MCF 10A (cell line): ENCODE measurements at regions of chr11 and their contacts with region 1.

Region 1: GRCh38 chr11:76782526-76783293 is 446 bp upstream of the TSKU start:
- DNase-seq: peak; percentile 90
- H3K4me3 Mint-ChIP-seq: peak overlapping the region; percentile 83
- H3K27ac Mint-ChIP-seq: peak overlapping the region; percentile 17
- H3K4me1 Mint-ChIP-seq: peaks cover 56% of the 10 kb centered on the region
- H3K27me3 Mint-ChIP-seq: no peaks in the 10 kb centered on the region
- CTCF ChIP-seq: no peak

Region 2: GRCh38 chr11:76588455-76589325 is 194.0 kb before region 1 on chr11:
- CTCF ChIA-PET with region 1: no interaction called
- POLR2A ChIA-PET with region 1: no interaction called
- intact Hi-C with region 1: no loop called
- DNase-seq: no peak
- H3K4me3 Mint-ChIP-seq: no peak overlapping the region
- H3K27ac Mint-ChIP-seq: peak overlapping the region; percentile 66
- H3K4me1 Mint-ChIP-seq: peaks cover 6% of the 10 kb centered on the region
- H3K27me3 Mint-ChIP-seq: no peaks in the 10 kb centered on the region
- CTCF ChIP-seq: no peak

Region 3: DNA sequence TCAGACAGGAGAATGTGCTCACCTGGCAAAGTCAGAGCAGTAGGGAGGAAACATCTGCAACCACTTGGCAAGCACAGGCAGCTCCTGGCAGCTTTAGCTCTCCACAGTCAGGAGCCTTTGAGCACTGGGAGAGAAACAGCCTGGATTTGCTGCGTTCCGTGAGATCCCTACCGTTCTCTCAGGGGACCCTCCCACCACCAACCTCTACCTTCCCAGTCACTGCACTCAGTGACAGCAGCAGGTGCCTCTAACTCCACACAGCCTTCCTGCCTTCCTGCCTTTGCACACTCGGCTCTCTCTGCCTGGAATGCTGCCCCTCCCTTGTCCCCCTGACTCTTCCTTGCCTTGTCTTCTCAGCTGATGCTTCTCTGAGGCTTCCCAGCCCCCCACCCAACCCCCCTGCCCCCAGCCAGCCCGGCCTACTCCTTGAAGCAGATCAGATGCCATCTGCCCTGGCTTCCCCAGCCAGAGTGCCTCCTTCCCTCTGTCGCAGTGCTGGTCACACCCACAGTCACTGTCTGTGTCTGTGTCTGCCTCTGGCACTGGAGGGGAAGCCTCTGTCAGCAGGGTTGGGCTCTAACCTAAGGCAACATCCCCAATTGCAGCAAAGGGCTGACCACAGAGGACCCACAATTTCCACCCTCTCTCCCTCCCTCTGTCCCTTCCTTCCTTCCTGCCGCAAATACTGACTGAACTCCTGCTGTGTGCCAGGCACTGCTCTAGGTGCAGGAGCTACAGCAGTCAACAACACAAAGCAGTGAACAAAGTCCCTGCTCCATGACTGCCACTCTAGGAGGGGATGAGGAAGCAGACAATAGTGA is 14.4 kb before region 1 on chr11:
- CTCF ChIA-PET with region 1: interaction called, 8 read pairs
- POLR2A ChIA-PET with region 1: interaction called, 83 read pairs
- intact Hi-C with region 1: no loop called
- DNase-seq: peak; percentile 64
- H3K4me3 Mint-ChIP-seq: peak overlapping the region; percentile 4
- H3K27ac Mint-ChIP-seq: peak overlapping the region; percentile 22
- H3K4me1 Mint-ChIP-seq: peaks cover 61% of the 10 kb centered on the region
- H3K27me3 Mint-ChIP-seq: no peaks in the 10 kb centered on the region
- CTCF ChIP-seq: no peak

Region 4: DNA sequence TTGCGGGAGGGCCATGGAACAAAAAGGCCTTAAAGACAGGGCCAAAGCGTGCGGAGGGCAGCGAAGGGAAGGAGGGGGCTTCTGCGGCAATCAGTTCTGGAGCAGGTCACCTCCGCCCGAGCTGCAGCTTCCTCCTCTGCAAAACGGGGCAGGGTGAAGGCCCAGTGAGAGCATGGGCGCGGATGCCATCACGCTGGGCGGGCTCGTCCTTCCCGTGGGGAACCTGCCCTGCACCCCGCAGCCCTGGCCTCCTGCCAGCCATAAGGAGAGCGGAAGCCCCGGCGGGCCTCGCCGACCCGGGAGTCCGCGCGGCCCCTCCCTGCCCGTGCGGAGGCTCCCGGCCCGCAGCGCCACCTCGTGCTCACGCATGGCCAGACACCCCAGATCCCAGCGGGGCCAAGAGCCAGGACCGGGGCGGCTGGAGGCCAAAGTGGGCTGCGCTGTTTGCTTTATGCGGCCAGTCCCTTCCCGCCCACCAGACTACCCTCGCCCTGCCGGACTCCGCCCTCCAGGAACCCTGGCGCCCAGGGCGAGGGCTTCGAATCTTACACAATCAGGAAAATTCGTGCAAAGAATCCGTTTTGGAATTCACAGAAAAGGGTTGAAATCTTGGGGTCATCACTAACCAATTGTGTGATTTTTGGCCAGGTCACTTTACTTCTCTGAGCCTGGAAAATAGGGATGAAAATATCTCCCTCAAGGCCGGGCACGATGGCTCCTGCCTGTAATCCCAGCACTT is 16.5 kb after region 1 on chr11:
- CTCF ChIA-PET with region 1: interaction called, 17 read pairs
- POLR2A ChIA-PET with region 1: interaction called, 10 read pairs
- intact Hi-C with region 1: no loop called
- DNase-seq: peak; percentile 77
- H3K4me3 Mint-ChIP-seq: no peak overlapping the region
- H3K27ac Mint-ChIP-seq: no peak overlapping the region
- H3K4me1 Mint-ChIP-seq: peaks cover 30% of the 10 kb centered on the region
- H3K27me3 Mint-ChIP-seq: no peaks in the 10 kb centered on the region
- CTCF ChIP-seq: peak; percentile 85